Common myeloid progenitor, CD34-positive (primary cell): ENCODE measurements at regions of chr10 and their contacts with region 1.

Region 1: GRCh38 chr10:103685880-103686669 is 169.3 kb downstream of the SH3PXD2A start:
- DNase-seq: peak; percentile 60 to 78 (median 67)
- H3K4me3 ChIP-seq: no peak overlapping the region
- H3K27ac ChIP-seq: no peak overlapping the region
- H3K4me1 ChIP-seq: no peaks in the 10 kb centered on the region
- H3K27me3 ChIP-seq: no peaks in the 10 kb centered on the region

Region 2: GRCh38 chr10:103592186-103593021 is 93.7 kb before region 1 on chr10:
- CTCF ChIA-PET with region 1: interaction called, 20 read pairs
- POLR2A ChIA-PET with region 1: no interaction called
- DNase-seq: peak; percentile 40 to 66 (median 56)
- H3K4me3 ChIP-seq: no peak overlapping the region
- H3K27ac ChIP-seq: no peak overlapping the region
- H3K4me1 ChIP-seq: no peaks in the 10 kb centered on the region
- H3K27me3 ChIP-seq: no peaks in the 10 kb centered on the region

Region 3: GRCh38 chr10:103612462-103613365 is 73.4 kb before region 1 on chr10:
- CTCF ChIA-PET with region 1: interaction called, 12 read pairs
- POLR2A ChIA-PET with region 1: no interaction called
- DNase-seq: no peak
- H3K4me3 ChIP-seq: no peak overlapping the region
- H3K27ac ChIP-seq: no peak overlapping the region
- H3K4me1 ChIP-seq: no peaks in the 10 kb centered on the region
- H3K27me3 ChIP-seq: no peaks in the 10 kb centered on the region

Region 4: DNA sequence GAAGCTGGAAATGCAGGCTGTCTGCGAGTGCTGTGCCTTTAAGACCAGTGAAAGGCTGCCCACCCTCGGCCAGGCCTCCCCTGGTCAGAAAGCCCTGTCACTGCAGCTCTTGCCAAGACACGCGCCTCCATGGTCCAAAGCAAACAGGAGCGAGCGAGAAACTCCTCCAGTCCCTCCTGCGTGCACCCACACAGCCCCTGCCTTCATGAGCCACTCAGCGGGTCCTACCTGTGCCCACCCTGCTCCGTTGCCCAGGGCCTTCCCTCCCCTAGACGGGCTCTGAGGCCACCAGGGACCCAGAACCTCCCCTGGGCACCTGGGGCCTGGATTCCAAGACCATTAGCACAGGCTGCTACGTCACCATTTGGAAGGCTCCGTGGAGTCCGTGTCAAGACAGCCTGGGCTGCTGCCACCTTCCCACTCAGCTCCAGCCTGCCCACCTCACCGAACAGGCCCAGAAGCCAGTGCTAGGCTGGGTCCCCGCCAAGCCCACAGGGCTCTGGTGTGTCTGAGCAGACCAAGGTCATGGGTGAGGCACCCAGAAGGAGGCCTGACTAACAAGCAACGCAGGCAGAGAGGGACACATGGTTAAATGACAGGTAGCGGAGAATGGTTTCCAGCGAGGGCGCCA is 48.0 kb before region 1 on chr10:
- CTCF ChIA-PET with region 1: interaction called, 10 read pairs
- POLR2A ChIA-PET with region 1: no interaction called
- DNase-seq: no peak
- H3K4me3 ChIP-seq: no peak overlapping the region
- H3K27ac ChIP-seq: no peak overlapping the region
- H3K4me1 ChIP-seq: no peaks in the 10 kb centered on the region
- H3K27me3 ChIP-seq: no peaks in the 10 kb centered on the region

Region 5: GRCh38 chr10:103659674-103660363 is 26.3 kb before region 1 on chr10:
- CTCF ChIA-PET with region 1: interaction called, 40 read pairs
- POLR2A ChIA-PET with region 1: interaction called, 4 read pairs
- DNase-seq: peak; percentile 75 to 86 (median 83)
- H3K4me3 ChIP-seq: peak overlapping the region; percentile 57 to 95 (median 77)
- H3K27ac ChIP-seq: peak overlapping the region; percentile 46 to 81
- H3K4me1 ChIP-seq: peaks cover 0 to 28% (median 23%) of the 10 kb centered on the region in 4 experiments
- H3K27me3 ChIP-seq: no peaks in the 10 kb centered on the region

Region 6: DNA sequence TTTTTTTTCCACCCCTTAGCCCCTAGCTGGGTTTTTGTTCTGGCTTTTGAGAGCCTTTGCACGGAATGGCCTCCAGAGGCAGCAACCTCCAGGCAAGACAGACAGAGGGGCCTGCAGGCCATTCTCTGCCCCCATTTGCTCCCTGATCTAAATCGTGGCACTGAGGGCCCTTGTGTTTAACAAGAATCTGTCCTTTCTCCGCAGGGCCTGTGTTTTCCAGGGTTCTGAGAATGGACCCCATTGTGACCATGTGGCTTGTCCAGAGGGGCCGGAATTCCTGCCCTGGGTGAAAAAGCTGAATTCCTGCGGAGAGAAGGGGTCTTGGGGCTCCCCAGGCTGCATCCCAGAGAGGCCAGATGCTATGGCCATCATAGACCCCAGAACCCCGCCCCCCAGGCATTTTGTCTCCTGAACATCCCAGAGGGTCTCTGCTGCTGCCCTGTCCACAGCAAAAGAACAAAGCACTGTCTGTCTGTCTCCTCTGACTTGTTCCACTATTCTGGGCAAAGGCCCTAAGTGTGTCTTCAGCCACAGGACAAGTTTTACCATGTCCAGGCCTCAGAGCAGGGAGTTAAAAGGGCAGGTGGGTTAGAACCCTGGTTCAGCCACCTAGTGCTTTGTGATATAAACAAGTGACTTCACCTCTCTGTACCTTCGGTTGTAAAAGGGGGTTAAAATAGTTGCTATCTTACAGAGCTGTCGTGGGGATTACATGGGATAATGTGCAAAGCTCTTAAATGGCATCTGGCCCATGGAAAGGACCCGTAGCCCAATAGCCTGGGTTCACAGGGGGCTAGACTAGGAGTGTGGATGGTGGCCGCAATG is 13.7 kb after region 1 on chr10:
- CTCF ChIA-PET with region 1: interaction called, 13 read pairs
- POLR2A ChIA-PET with region 1: no interaction called
- DNase-seq: no peak
- H3K4me3 ChIP-seq: no peak overlapping the region
- H3K27ac ChIP-seq: no peak overlapping the region
- H3K4me1 ChIP-seq: peaks cover 0 to 16% (median 9%) of the 10 kb centered on the region in 4 experiments
- H3K27me3 ChIP-seq: peaks cover 0 to 3% (median 0%) of the 10 kb centered on the region in 5 experiments